T-cell (primary cell): ENCODE measurements at regions of chr1 and their contacts with region 1.

Region 1: DNA sequence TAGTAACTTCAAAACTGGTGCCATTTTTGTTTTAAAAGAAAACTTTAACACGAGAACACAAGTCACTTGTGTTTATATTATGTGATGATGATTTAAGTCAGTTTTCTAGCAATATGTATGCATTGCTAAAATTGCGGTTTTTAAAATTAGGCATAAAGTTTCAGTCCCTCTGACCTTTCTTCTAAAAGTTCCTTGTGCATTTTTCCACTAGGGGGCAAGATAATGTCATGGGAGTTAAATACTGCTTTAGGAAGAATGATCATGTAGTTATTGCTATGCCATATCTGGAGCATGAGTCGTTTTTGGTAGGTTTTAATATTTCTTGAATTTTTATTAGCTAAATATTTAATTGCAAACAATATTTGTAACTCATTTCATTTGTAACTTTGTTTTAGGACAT is 10.7 kb downstream of the CDC7 start:
- DNase-seq: peak in 1 of 35 experiments; percentile 68
- ATAC-seq: peak in 3 of 4 experiments; percentile 50 to 60 (median 53)
- H3K4me3 ChIP-seq: no peak overlapping the region
- H3K4me3 Mint-ChIP-seq: no peak overlapping the region
- H3K27ac ChIP-seq: no peak overlapping the region
- H3K27ac Mint-ChIP-seq: no peak overlapping the region
- H3K4me1 ChIP-seq: peaks cover 0 to 4% of the 10 kb centered on the region in 2 experiments
- H3K4me1 Mint-ChIP-seq: peaks cover 4 to 6% (median 6%) of the 10 kb centered on the region in 3 donors
- H3K27me3 ChIP-seq: no peaks in the 10 kb centered on the region
- H3K27me3 Mint-ChIP-seq: no peaks in the 10 kb centered on the region

Region 2: GRCh38 chr1:91273875-91274274 is 237.5 kb before region 1 on chr1:
- CTCF ChIA-PET with region 1: no interaction called
- POLR2A ChIA-PET with region 1: no interaction called
- DNase-seq: no peak
- ATAC-seq: no peak
- H3K4me3 ChIP-seq: no peak overlapping the region
- H3K4me3 Mint-ChIP-seq: no peak overlapping the region
- H3K27ac ChIP-seq: no peak overlapping the region
- H3K27ac Mint-ChIP-seq: no peak overlapping the region
- H3K4me1 ChIP-seq: no peaks in the 10 kb centered on the region
- H3K4me1 Mint-ChIP-seq: no peaks in the 10 kb centered on the region
- H3K27me3 ChIP-seq: no peaks in the 10 kb centered on the region
- H3K27me3 Mint-ChIP-seq: peaks cover 1 to 2% of the 10 kb centered on the region in 2 donors

Region 3: DNA sequence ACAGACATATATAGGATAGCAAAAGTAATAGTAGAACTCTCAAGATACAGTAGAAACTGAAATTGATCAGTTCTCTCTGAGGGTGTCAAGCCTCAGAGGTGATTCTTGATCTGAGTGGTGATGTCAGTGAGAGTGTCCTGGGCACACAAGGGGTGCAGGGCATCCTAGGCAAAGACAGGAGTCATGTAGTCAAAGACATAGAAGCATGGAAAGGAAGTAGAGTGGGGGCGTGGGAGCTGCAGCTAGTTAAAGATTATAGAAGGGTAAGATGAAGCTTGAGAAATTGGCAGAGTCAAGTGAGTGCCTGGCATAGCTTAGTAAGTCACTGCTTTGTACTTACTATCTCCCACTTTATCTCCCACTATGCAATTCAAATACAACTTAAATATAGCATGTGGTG is 12.1 kb after region 1 on chr1:
- CTCF ChIA-PET with region 1: interaction called, 7 to 30 read pairs
- POLR2A ChIA-PET with region 1: interaction called in 1 of 2 experiments, 4 read pairs
- DNase-seq: no peak
- ATAC-seq: peak in 2 of 4 experiments; percentile 23 to 47
- H3K4me3 ChIP-seq: no peak overlapping the region
- H3K4me3 Mint-ChIP-seq: no peak overlapping the region
- H3K27ac ChIP-seq: no peak overlapping the region
- H3K27ac Mint-ChIP-seq: peak overlapping the region in 1 of 2 donors; percentile 1
- H3K4me1 ChIP-seq: peaks cover 0 to 3% of the 10 kb centered on the region in 2 experiments
- H3K4me1 Mint-ChIP-seq: peaks cover 10 to 23% (median 12%) of the 10 kb centered on the region in 3 donors
- H3K27me3 ChIP-seq: no peaks in the 10 kb centered on the region
- H3K27me3 Mint-ChIP-seq: no peaks in the 10 kb centered on the region

Region 4: GRCh38 chr1:91803847-91804545 is 292.6 kb after region 1 on chr1:
- CTCF ChIA-PET with region 1: interaction called in 1 of 2 experiments, 12 read pairs
- POLR2A ChIA-PET with region 1: no interaction called
- DNase-seq: peak; percentile 56 to 94 (median 73)
- ATAC-seq: peak; percentile 61 to 67 (median 64)
- H3K4me3 ChIP-seq: peak overlapping the region; percentile 19 to 38
- H3K4me3 Mint-ChIP-seq: peak overlapping the region; percentile 69 to 78 (median 76)
- H3K27ac ChIP-seq: peak overlapping the region; percentile 98
- H3K27ac Mint-ChIP-seq: peak overlapping the region; percentile 95 to 96
- H3K4me1 ChIP-seq: peaks cover 21 to 47% of the 10 kb centered on the region in 2 experiments
- H3K4me1 Mint-ChIP-seq: peaks cover 48 to 74% (median 55%) of the 10 kb centered on the region in 3 donors
- H3K27me3 ChIP-seq: no peaks in the 10 kb centered on the region
- H3K27me3 Mint-ChIP-seq: no peaks in the 10 kb centered on the region

Region 5: DNA sequence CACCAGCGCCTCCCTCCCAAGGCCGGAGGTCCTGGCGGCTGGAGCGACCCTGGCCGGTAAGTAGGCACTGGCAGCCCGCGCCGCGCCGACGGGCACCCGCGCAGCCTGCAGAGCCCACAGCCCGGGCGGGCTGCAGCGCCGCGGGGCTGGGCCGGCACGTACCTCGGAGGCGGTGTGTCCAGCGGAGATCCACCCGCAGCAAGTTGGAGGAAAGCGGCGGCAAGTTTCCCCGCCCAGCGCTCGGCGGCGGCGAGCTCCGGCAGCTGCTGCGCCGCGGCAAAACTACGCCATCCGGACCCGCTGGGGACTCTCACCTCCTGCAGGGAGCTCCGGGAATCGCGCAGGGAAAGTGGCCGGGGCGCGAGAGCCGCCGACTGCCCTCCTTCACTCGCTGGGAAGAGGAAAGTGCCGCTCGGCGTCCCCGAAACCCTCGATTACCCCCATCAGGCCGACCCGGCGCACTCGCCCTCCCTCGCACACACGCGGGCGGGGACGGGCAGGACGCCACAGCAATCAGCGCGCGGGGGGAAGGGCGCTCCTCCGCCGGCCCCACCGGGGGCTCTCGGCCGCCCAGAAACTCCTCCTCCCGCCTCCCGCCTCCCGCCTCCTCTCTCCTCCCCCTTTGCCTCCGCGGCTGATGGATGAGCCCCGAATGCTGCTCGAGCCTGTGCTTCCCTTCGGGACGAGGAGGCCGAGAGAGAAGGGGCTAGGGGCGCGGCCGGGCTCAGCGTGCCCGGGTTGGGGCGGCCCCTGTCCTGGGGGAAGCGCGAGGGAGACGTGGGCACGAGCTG is 374.5 kb after region 1 on chr1 and contains the start of gene TGFBR3:
- CTCF ChIA-PET with region 1: interaction called, 5 to 21 read pairs
- POLR2A ChIA-PET with region 1: interaction called in 1 of 2 experiments, 6 read pairs
- DNase-seq: peak; percentile 53 to 84 (median 71)
- ATAC-seq: peak; percentile 76 to 83 (median 80)
- H3K4me3 ChIP-seq: peak within 1 kb of the TSS; percentile 79 to 83
- H3K4me3 Mint-ChIP-seq: peak within 1 kb of the TSS; percentile 96 to 100 (median 99)
- H3K27ac ChIP-seq: peak within 1 kb of the TSS; percentile 53
- H3K27ac Mint-ChIP-seq: peak within 1 kb of the TSS; percentile 86 to 89
- H3K4me1 ChIP-seq: peaks cover 8 to 30% of the 10 kb centered on the region in 2 experiments
- H3K4me1 Mint-ChIP-seq: peaks cover 34 to 53% (median 46%) of the 10 kb centered on the region in 3 donors
- H3K27me3 ChIP-seq: peaks cover 0 to 8% of the 10 kb centered on the region in 2 experiments
- H3K27me3 Mint-ChIP-seq: no peaks in the 10 kb centered on the region
- total RNA-seq, gene TGFBR3: 17.5 to 65.4 (median 36.4) TPM

Region 6: GRCh38 chr1:91929250-91929649 is 417.9 kb after region 1 on chr1:
- CTCF ChIA-PET with region 1: interaction called, 41 to 69 read pairs
- POLR2A ChIA-PET with region 1: interaction called in 1 of 2 experiments, 3 read pairs
- DNase-seq: no peak
- ATAC-seq: no peak
- H3K4me3 ChIP-seq: no peak overlapping the region
- H3K4me3 Mint-ChIP-seq: no peak overlapping the region
- H3K27ac ChIP-seq: no peak overlapping the region
- H3K27ac Mint-ChIP-seq: no peak overlapping the region
- H3K4me1 ChIP-seq: peaks cover 0 to 3% of the 10 kb centered on the region in 2 experiments
- H3K4me1 Mint-ChIP-seq: peaks cover 0 to under 1% (median 0%) of the 10 kb centered on the region in 3 donors
- H3K27me3 ChIP-seq: no peaks in the 10 kb centered on the region
- H3K27me3 Mint-ChIP-seq: no peaks in the 10 kb centered on the region

Region 7: GRCh38 chr1:92792340-92792782 is 1281.0 kb after region 1 on chr1:
- CTCF ChIA-PET with region 1: no interaction called
- POLR2A ChIA-PET with region 1: no interaction called
- DNase-seq: no peak
- ATAC-seq: no peak
- H3K4me3 ChIP-seq: no peak overlapping the region
- H3K4me3 Mint-ChIP-seq: no peak overlapping the region
- H3K27ac ChIP-seq: no peak overlapping the region
- H3K27ac Mint-ChIP-seq: no peak overlapping the region
- H3K4me1 ChIP-seq: no peaks in the 10 kb centered on the region
- H3K4me1 Mint-ChIP-seq: no peaks in the 10 kb centered on the region
- H3K27me3 ChIP-seq: peaks cover 2 to 11% of the 10 kb centered on the region in 2 experiments
- H3K27me3 Mint-ChIP-seq: peaks cover 16 to 32% of the 10 kb centered on the region in 2 donors